ENCODE measurements at regions of chr3 and their contacts with region 1.

Region 1: DNA sequence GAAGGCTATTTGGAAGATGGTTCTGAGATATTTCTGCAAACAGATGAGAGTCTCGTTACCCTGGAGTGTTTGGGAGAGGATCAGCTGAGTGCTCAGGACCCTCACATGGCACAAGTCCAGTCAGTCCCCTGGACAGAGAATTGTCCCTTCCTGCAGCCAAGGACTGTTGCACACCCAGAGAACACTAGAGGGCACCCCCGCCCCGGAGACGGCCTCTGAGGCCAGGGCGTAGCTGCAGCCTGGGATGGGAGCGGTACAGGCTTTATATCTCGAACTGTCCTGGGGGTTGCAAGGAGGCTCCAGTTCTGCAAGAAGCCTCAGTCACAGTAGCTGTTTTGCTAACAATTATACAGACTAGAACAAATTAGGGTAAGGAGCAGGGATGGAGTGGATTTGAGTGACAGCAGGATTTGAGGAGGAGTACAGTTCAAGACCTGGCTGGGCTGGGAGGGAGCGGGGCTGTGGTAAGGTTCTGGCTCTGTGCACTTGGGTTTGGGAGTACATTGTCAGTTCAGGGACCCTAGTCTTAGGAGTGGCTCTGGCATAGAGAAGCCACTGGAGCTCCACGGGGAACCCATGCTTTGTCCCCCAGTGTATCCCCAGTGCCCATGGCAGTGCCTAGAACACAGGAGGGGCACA is 67.6 kb upstream of the HACD2 start:
- DNase-seq: peak; percentile 46
- ATAC-seq: peak; percentile 80
- H3K4me3 Mint-ChIP-seq: no peak overlapping the region
- H3K27ac Mint-ChIP-seq: no peak overlapping the region
- H3K4me1 Mint-ChIP-seq: no peaks in the 10 kb centered on the region
- H3K27me3 Mint-ChIP-seq: no peaks in the 10 kb centered on the region
- CTCF ChIP-seq: no peak

Region 2: GRCh38 chr3:123642182-123642956 is 10.1 kb before region 1 on chr3:
- CTCF ChIA-PET with region 1: interaction called, 10 read pairs
- POLR2A ChIA-PET with region 1: no interaction called
- intact Hi-C with region 1: no loop called
- DNase-seq: peak; percentile 28
- ATAC-seq: peak; percentile 70
- H3K4me3 Mint-ChIP-seq: no peak overlapping the region
- H3K27ac Mint-ChIP-seq: no peak overlapping the region
- H3K4me1 Mint-ChIP-seq: no peaks in the 10 kb centered on the region
- H3K27me3 Mint-ChIP-seq: no peaks in the 10 kb centered on the region
- CTCF ChIP-seq: no peak

Region 3: GRCh38 chr3:123700791-123701722 is 48.6 kb after region 1 on chr3:
- CTCF ChIA-PET with region 1: interaction called, 36 read pairs
- POLR2A ChIA-PET with region 1: no interaction called
- intact Hi-C with region 1: loop called (anchors 1 kb)
- DNase-seq: no peak
- ATAC-seq: no peak
- H3K4me3 Mint-ChIP-seq: no peak overlapping the region
- H3K27ac Mint-ChIP-seq: no peak overlapping the region
- H3K4me1 Mint-ChIP-seq: peaks cover 6% of the 10 kb centered on the region
- H3K27me3 Mint-ChIP-seq: peaks cover 1% of the 10 kb centered on the region
- CTCF ChIP-seq: no peak

Region 4: DNA sequence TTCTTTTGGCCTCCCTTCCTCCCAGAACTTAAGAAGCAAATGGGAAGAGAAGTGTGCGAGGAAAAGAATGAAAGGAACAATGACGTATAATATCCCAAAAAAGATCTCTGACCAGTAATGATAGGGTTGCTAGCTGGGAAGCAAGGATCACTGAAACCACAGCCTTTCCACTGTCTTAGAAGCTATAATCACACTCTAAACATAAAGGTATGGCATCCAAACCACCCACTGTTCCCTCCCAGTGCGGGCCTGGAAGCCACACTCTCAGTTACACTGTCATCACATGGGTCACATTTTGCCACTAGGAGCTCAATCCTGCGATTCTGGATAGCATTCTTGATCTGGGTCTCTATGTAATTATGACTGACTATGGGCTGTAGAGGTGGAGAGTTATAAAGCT is 63.9 kb after region 1 on chr3:
- CTCF ChIA-PET with region 1: interaction called, 14 read pairs
- POLR2A ChIA-PET with region 1: no interaction called
- intact Hi-C with region 1: loop called (anchors 1 kb)
- DNase-seq: no peak
- ATAC-seq: no peak
- H3K4me3 Mint-ChIP-seq: no peak overlapping the region
- H3K27ac Mint-ChIP-seq: no peak overlapping the region
- H3K4me1 Mint-ChIP-seq: no peaks in the 10 kb centered on the region
- H3K27me3 Mint-ChIP-seq: peaks cover 9% of the 10 kb centered on the region
- CTCF ChIP-seq: no peak

Region 5: DNA sequence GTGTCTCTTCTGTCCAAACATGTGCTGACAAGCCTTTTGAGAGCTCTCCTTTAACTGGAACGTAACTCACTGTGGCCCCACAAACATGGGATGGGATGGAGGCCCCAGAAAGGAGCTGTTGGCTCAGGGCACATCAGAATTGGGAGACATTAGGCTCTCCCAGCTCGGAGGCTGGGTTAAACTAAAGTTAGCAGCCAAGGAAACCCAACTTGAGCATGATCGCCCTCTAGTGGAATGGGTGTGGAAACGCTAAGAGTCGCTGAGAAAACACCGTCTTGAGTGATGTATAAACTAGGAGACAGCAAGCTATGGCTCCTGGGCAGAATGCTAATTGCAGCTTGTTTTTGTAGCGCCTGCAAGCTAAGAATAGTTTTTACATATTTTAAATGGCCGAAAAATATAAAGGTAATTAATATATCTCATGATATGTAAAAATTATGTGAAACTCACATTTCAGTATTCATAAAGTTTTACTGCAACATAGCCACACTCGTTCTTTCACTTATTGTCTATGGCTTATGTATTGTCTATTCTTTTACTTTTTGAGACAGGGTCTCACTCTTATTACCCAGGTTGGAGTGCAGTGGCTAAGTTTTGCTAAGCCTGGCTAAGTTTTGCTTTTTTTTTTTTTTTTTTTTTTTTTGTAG is 71.2 kb after region 1 on chr3:
- CTCF ChIA-PET with region 1: interaction called, 18 read pairs
- POLR2A ChIA-PET with region 1: no interaction called
- intact Hi-C with region 1: loop called (anchors 1 kb)
- DNase-seq: no peak
- ATAC-seq: peak; percentile 65
- H3K4me3 Mint-ChIP-seq: no peak overlapping the region
- H3K27ac Mint-ChIP-seq: no peak overlapping the region
- H3K4me1 Mint-ChIP-seq: no peaks in the 10 kb centered on the region
- H3K27me3 Mint-ChIP-seq: peaks cover 4% of the 10 kb centered on the region
- CTCF ChIP-seq: peak; percentile 39

Region 6: GRCh38 chr3:123980539-123980938 is 328.1 kb after region 1 on chr3:
- CTCF ChIA-PET with region 1: no interaction called
- POLR2A ChIA-PET with region 1: no interaction called
- intact Hi-C with region 1: loop called (anchors 1 kb)
- DNase-seq: no peak
- ATAC-seq: no peak
- H3K4me3 Mint-ChIP-seq: no peak overlapping the region
- H3K27ac Mint-ChIP-seq: no peak overlapping the region
- H3K4me1 Mint-ChIP-seq: no peaks in the 10 kb centered on the region
- H3K27me3 Mint-ChIP-seq: peaks cover 34% of the 10 kb centered on the region
- CTCF ChIP-seq: no peak

Region 7: DNA sequence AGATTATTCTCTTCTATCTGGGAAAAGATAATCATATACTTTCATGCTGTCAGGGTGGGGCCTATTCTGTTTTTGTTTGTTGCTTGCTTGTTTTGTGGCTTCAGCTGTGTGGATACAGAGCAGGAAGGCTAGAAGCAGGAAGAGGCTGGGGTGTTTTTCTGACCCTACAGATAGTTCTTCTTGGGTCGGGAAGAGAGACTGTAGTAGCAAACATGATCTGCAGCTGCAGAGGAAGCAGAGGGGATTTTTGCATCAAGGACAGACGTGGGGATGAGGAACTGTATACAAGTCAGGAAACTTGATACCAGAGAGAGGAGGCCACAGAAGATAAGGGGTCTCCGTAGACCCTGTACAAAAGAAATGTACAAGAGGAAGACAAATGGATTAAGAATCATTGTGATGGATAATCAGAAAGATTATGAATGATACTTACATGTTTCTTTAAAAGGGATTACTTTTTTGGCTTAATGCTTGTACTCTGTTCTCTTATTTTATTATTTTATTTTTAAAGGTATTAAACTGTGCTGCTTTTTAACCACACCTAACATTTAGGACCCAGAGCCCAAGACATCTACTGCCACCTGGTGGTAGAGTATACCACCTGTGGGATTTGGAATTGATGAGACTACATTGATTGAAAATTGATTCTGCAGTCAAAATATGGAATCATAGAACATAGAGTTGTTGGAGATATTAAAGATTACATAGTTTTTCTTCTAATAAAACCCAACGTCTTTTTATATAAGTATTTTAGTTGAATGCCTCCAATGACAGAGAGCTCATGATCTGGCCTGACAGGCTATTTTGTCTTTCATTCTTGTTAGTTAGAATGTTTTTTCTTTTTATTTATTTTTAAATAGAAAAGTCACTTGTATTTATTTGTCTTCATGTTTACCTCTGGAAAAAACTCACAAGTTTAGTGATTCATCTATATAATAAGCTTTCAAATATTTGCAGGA is 426.8 kb after region 1 on chr3:
- CTCF ChIA-PET with region 1: no interaction called
- POLR2A ChIA-PET with region 1: no interaction called
- intact Hi-C with region 1: loop called (anchors 2 kb)
- DNase-seq: no peak
- ATAC-seq: no peak
- H3K4me3 Mint-ChIP-seq: no peak overlapping the region
- H3K27ac Mint-ChIP-seq: no peak overlapping the region
- H3K4me1 Mint-ChIP-seq: peaks cover 3% of the 10 kb centered on the region
- H3K27me3 Mint-ChIP-seq: peaks cover 17% of the 10 kb centered on the region
- CTCF ChIP-seq: peak; percentile 79

Region 8: GRCh38 chr3:124347418-124347817 is 695.0 kb after region 1 on chr3:
- CTCF ChIA-PET with region 1: no interaction called
- POLR2A ChIA-PET with region 1: no interaction called
- intact Hi-C with region 1: no loop called
- DNase-seq: no peak
- ATAC-seq: no peak
- H3K4me3 Mint-ChIP-seq: no peak overlapping the region
- H3K27ac Mint-ChIP-seq: no peak overlapping the region
- H3K4me1 Mint-ChIP-seq: no peaks in the 10 kb centered on the region
- H3K27me3 Mint-ChIP-seq: no peaks in the 10 kb centered on the region
- CTCF ChIP-seq: no peak

Measured in activated B cell treated with CpG ODN at 0.5 μM for 24 hours (primary cell).